ENCODE measurements at regions of chr20 and their contacts with region 1.

Region 1: GRCh38 chr20:23050847-23051631 is 1.6 kb upstream of the THBD start:
- DNase-seq: peak; percentile 79 to 91 (median 88)
- ATAC-seq: peak; percentile 52 to 74 (median 61)
- H3K4me3 ChIP-seq: peak overlapping the region; percentile 50 to 88 (median 69)
- H3K27ac ChIP-seq: peak overlapping the region; percentile 74 to 97 (median 90)
- H3K4me1 ChIP-seq: peaks cover 0 to 55% (median 27%) of the 10 kb centered on the region in 12 donors
- H3K27me3 ChIP-seq: peaks cover 0 to 48% (median 12%) of the 10 kb centered on the region in 9 donors
- CTCF ChIP-seq: peak; percentile 60 to 86 (median 76)
- POLR2A ChIP-seq: no peak

Region 2: GRCh38 chr20:22691369-22692118 is 359.5 kb before region 1 on chr20:
- intact Hi-C with region 1: loop called in 8 of 10 experiments (anchors 2 to 5 kb)
- DNase-seq: peak; percentile 79 to 87 (median 84)
- ATAC-seq: peak; percentile 85 to 95 (median 92)
- H3K4me3 ChIP-seq: peak overlapping the region in 6 of 12 donors; percentile 18 to 32 (median 26)
- H3K27ac ChIP-seq: peak overlapping the region in 7 of 12 donors; percentile 16 to 61 (median 31)
- H3K4me1 ChIP-seq: peaks cover 0 to 25% (median 8%) of the 10 kb centered on the region in 12 donors
- H3K27me3 ChIP-seq: no peaks in the 10 kb centered on the region
- CTCF ChIP-seq: peak; percentile 88 to 96 (median 92)
- POLR2A ChIP-seq: no peak

Region 3: GRCh38 chr20:22846863-22847262 is 204.2 kb before region 1 on chr20:
- intact Hi-C with region 1: loop called in 1 of 10 experiments (anchors 5 kb)
- DNase-seq: no peak
- ATAC-seq: no peak
- H3K4me3 ChIP-seq: no peak overlapping the region
- H3K27ac ChIP-seq: no peak overlapping the region
- H3K4me1 ChIP-seq: peaks cover 0 to 5% (median 0%) of the 10 kb centered on the region in 12 donors
- H3K27me3 ChIP-seq: peaks cover 0 to 7% (median 0%) of the 10 kb centered on the region in 9 donors
- CTCF ChIP-seq: no peak
- POLR2A ChIP-seq: no peak

Region 4: GRCh38 chr20:22984606-22985005 is 66.4 kb before region 1 on chr20:
- intact Hi-C with region 1: loop called in 4 of 10 experiments (anchors 2 to 10 kb)
- DNase-seq: peak in 4 of 5 donors; percentile 33 to 66 (median 38)
- ATAC-seq: peak in 2 of 4 donors; percentile 39 to 77
- H3K4me3 ChIP-seq: no peak overlapping the region
- H3K27ac ChIP-seq: peak overlapping the region in 10 of 12 donors; percentile 32 to 70 (median 56)
- H3K4me1 ChIP-seq: peaks cover 0 to 22% (median 9%) of the 10 kb centered on the region in 12 donors
- H3K27me3 ChIP-seq: no peaks in the 10 kb centered on the region
- CTCF ChIP-seq: no peak
- POLR2A ChIP-seq: no peak

Region 5: DNA sequence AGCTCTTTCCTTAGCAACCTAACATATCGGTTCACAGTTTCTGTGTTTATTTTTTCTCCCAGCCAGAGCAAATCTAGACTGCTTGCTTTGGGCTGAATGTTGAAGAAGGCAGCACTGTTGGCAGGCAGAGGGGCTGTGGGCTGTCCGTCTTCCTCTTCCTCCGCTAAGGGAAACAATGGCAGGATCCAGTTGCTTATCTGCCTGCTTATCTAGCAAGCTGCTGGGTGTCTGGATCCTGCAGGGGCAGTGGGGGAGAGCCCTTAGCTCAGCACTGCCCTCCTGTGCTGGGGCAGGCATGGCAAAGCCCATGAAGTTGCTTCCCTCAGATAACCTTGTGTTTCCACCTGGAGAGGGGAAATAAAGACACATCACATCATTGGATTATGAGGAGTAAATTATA is 127.8 kb after region 1 on chr20:
- intact Hi-C with region 1: loop called in 1 of 10 experiments (anchors 2 kb)
- DNase-seq: peak in 3 of 5 donors; percentile 51 to 68 (median 67)
- ATAC-seq: peak; percentile 33 to 85 (median 69)
- H3K4me3 ChIP-seq: no peak overlapping the region
- H3K27ac ChIP-seq: peak overlapping the region in 10 of 12 donors; percentile 57 to 84 (median 68)
- H3K4me1 ChIP-seq: peaks cover 0 to 33% (median 14%) of the 10 kb centered on the region in 12 donors
- H3K27me3 ChIP-seq: no peaks in the 10 kb centered on the region
- CTCF ChIP-seq: peak; percentile 29 to 61 (median 50)
- POLR2A ChIP-seq: no peak

Region 6: DNA sequence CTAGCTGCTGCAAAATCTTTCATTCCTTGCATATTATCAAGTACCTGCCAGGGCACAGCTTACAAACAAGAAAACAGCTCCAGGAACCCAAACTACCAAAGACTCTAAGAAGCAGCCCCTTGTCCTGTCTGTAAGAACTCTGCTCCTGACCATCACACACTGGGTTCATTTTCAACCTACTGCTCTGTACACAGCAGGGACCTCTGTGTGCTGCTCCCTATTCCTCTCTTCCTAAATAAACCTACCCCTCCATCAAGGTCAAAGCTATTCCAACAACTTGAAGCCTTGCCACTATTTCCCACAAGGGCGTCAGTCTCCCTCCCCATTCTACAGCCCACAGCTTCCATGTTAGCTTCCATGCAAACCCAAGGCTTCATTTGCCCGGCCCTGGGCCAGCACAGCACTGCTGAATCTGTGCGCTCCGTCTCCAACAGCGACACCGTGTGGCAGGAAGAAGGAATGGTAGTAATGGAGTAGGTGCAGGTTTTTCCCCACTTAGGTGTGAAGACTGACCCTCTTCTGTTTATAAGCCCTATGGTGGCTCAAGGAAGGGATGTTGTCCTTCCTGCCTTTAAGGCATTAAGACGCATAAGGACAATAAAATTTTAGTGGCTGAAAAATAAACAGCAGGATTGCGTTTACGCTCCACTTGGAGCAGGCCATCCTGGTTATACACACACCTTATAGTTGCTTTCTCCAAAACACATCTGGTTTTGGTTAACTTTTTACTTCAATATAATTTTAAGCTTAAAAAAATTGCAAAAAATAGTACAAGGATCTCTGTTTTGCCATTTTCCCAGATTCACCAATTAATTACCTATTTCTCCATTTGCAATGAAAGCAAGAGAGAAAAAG is 184.4 kb after region 1 on chr20:
- intact Hi-C with region 1: loop called (anchors 2 to 5 kb)
- DNase-seq: peak; percentile 76 to 85 (median 76)
- ATAC-seq: peak; percentile 87 to 95 (median 95)
- H3K4me3 ChIP-seq: no peak overlapping the region
- H3K27ac ChIP-seq: no peak overlapping the region
- H3K4me1 ChIP-seq: peaks cover 0 to 4% (median 0%) of the 10 kb centered on the region in 12 donors
- H3K27me3 ChIP-seq: no peaks in the 10 kb centered on the region
- CTCF ChIP-seq: peak; percentile 80 to 93 (median 86)
- POLR2A ChIP-seq: no peak

Region 7: DNA sequence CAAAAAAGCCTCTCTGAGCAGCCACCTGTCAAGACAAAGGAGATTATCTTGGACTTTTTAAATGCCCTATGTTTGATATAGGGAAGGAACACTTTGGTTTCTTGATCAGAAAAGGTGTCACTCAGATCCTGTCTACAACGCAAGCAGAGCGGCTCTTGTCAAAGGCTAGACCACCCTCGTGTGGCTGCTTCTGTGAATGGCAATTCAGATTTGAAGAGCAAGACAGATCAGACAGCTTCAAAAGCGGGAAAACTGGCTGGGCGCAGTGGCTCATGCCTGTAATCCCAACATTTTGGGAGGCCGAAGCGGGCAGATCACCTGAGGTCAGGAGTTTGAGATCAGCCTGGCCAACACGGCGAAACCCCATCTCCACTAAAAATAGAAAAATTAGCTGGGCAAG is 289.5 kb after region 1 on chr20:
- intact Hi-C with region 1: loop called (anchors 2 to 10 kb)
- DNase-seq: peak; percentile 60 to 74 (median 72)
- ATAC-seq: peak in 3 of 4 donors; percentile 84 to 89 (median 87)
- H3K4me3 ChIP-seq: no peak overlapping the region
- H3K27ac ChIP-seq: no peak overlapping the region
- H3K4me1 ChIP-seq: peaks cover 0 to 5% (median 1%) of the 10 kb centered on the region in 12 donors
- H3K27me3 ChIP-seq: no peaks in the 10 kb centered on the region
- CTCF ChIP-seq: peak; percentile 52 to 86 (median 77)
- POLR2A ChIP-seq: no peak

Measured in heart left ventricle (tissue), 16 donors.